ENCODE measurements at regions of chr17 and their contacts with region 1.

Region 1: DNA sequence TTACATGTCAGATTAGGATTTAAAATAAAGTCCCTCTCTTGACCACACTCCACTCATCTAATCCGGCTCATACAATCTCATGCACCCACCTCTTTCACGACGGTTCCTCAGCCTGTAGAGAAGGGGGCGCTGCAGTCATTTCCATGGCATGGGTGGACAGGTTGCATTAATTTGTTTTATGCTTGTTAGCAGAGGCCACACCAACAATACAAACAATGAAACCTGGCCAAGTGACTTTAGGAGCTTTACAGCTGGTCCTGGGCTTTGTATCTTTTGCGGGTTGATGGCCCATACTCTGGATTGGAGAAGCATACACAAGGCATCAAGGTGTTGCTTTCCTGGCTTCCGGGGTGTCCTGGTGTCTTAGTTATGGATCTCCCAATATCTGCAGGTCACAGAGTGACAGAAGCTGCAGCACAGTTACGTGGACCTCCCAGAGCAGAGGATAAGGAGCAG is 9.7 kb upstream of the SNF8 start:
- DNase-seq: peak; percentile 66 to 91
- ATAC-seq: peak; percentile 94 to 98
- H3K4me3 ChIP-seq: 0 out of 3 replicates have a peak overlapping the region, but pooled peaks have one; percentile 12
- H3K27ac ChIP-seq: peak overlapping the region; percentile 78 to 82
- H3K4me1 ChIP-seq: peaks cover 49% of the 10 kb centered on the region
- CTCF ChIP-seq: peak; percentile 98
- EP300 ChIP-seq: no peak
- POLR2A ChIP-seq: no peak
- RAD21 ChIP-seq: peak; percentile 99 to 100

Region 2: DNA sequence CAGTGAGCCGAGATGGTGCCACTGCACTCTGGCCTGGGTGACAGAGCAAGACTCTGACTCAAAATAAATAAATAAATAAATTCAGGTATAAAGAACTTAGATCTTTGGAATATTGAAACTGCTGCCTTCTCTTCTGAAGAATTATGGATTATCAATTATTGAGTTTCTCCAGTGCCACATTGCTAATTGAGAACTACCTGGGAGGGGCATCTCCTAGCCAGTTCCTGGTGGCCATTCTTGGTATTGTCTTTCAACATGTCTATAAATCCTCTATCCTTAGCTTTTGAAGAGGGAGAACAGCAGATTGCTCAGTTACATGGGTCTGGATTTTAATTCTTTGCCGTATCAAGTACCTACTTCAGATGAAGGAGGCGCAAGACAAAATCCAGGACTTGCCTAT is 94.3 kb before region 1 on chr17:
- CTCF ChIA-PET with region 1: no interaction called
- POLR2A ChIA-PET with region 1: no interaction called
- DNase-seq: peak in 1 of 2 experiments; percentile 41
- ATAC-seq: peak; percentile 47 to 71; a peak in 4 of 6 replicates
- H3K4me3 ChIP-seq: no peak overlapping the region
- H3K27ac ChIP-seq: no peak overlapping the region
- H3K4me1 ChIP-seq: no peaks in the 10 kb centered on the region
- CTCF ChIP-seq: no peak
- EP300 ChIP-seq: no peak
- POLR2A ChIP-seq: no peak
- RAD21 ChIP-seq: no peak

Region 3: GRCh38 chr17:48970224-48970623 is 15.9 kb after region 1 on chr17:
- CTCF ChIA-PET with region 1: interaction called, 83 read pairs
- POLR2A ChIA-PET with region 1: interaction called, 4 read pairs
- DNase-seq: peak in 1 of 2 experiments; percentile 61
- ATAC-seq: peak; percentile 2; a peak in 2 of 6 replicates
- H3K4me3 ChIP-seq: no peak overlapping the region
- H3K27ac ChIP-seq: peak overlapping the region; percentile 95 to 98
- H3K4me1 ChIP-seq: peaks cover 51% of the 10 kb centered on the region
- CTCF ChIP-seq: no peak
- EP300 ChIP-seq: no peak
- POLR2A ChIP-seq: no peak
- RAD21 ChIP-seq: no peak

Region 4: GRCh38 chr17:48997083-48997826 is 42.9 kb after region 1 on chr17 and contains the start of gene IGF2BP1:
- CTCF ChIA-PET with region 1: interaction called, 256 read pairs
- POLR2A ChIA-PET with region 1: interaction called, 156 read pairs
- DNase-seq: peak; percentile 88 to 95
- ATAC-seq: peak; percentile 49 to 58
- H3K4me3 ChIP-seq: peak within 1 kb of the TSS; percentile 60
- H3K27ac ChIP-seq: peak within 1 kb of the TSS; percentile 93 to 97
- H3K4me1 ChIP-seq: peaks cover 40% of the 10 kb centered on the region
- CTCF ChIP-seq: no peak
- EP300 ChIP-seq: no peak
- POLR2A ChIP-seq: peak; percentile 4; the same call in 1 of the 2 replicates
- RAD21 ChIP-seq: peak in 1 of 2 experiments; percentile 14; a peak in 1 of 5 replicates
- polyA plus RNA-seq, gene IGF2BP1: 26.2 and 30.1 TPM in 2 replicates

Region 5: GRCh38 chr17:49022391-49022941 is 68.1 kb after region 1 on chr17:
- CTCF ChIA-PET with region 1: interaction called, 383 read pairs
- POLR2A ChIA-PET with region 1: no interaction called
- DNase-seq: peak; percentile 53 to 69
- ATAC-seq: peak; percentile 65 to 67
- H3K4me3 ChIP-seq: peak overlapping the region; percentile 7; the same call in 1 of the 3 replicates
- H3K27ac ChIP-seq: peak overlapping the region; percentile 79 to 90
- H3K4me1 ChIP-seq: peaks cover 76% of the 10 kb centered on the region
- CTCF ChIP-seq: no peak
- EP300 ChIP-seq: peak; percentile 20 to 42; a peak in 1 of 5 replicates
- POLR2A ChIP-seq: no peak
- RAD21 ChIP-seq: no peak

Region 6: DNA sequence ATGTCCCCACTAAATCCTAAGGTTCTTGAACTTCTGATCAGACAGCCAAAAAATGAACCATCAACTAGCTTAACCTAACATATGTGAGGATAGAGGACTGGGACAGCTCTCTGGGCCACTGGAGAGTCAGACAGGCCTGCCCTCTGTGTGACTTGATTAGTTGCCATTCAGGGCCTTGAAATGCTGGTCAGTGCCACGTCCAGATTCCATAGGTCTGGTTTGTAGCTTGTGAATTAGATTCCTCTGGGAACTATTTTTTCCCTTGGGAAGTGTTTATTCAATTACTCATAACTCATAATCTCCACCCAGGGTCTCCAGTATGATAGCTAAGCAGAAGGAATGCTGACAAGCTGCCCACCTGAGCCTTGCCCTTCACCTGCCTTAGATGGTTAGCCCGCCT is 91.0 kb after region 1 on chr17:
- CTCF ChIA-PET with region 1: interaction called, 23 read pairs
- POLR2A ChIA-PET with region 1: no interaction called
- DNase-seq: no peak
- ATAC-seq: peak in 1 of 2 experiments; percentile 26; a peak in 1 of 6 replicates
- H3K4me3 ChIP-seq: no peak overlapping the region
- H3K27ac ChIP-seq: no peak overlapping the region
- H3K4me1 ChIP-seq: peaks cover 14% of the 10 kb centered on the region
- CTCF ChIP-seq: no peak
- EP300 ChIP-seq: no peak
- POLR2A ChIP-seq: no peak
- RAD21 ChIP-seq: no peak

Measured in A549 (cell line).